Activated CD4-positive, alpha-beta memory T cell treated with anti-CD3 and anti-CD28 coated beads, Interleukin-2, amount 10 ng/mL, durations not matched to agents 7 days and 5 days (primary cell): ENCODE measurements at regions of chr13 and their contacts with region 1.

Region 1: GRCh38 chr13:49278211-49278610 is 30.5 kb downstream of the CDADC1 start:
- DNase-seq: no peak
- H3K4me3 Mint-ChIP-seq: no peak overlapping the region
- H3K27ac Mint-ChIP-seq: no peak overlapping the region
- H3K4me1 Mint-ChIP-seq: no peaks in the 10 kb centered on the region
- H3K27me3 Mint-ChIP-seq: no peaks in the 10 kb centered on the region

Region 2: DNA sequence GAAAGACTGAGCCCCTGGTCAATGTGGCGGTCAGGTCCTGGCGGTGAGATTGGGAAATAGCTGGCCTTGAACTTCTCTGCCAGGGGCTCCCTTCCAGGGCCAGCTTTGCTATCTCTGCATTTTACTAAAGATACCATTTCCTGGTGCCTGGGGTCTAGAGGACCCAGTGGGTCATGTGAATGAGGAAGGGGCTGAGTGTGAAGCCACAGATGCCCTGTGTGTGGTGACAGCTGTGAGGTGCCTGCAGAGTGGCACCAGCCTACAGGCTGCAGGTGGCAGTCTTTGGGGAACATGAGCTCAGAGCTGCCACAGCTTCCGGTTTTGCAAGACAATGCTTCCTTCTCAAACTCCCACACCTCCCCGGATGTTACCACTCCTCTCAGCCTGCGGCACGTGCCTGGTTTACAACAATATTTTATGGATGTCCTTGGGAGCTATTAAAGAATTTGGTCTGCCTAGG is 63.3 kb before region 1 on chr13:
- CTCF ChIA-PET with region 1: interaction called, 13 read pairs
- POLR2A ChIA-PET with region 1: no interaction called
- DNase-seq: peak; percentile 56
- H3K4me3 Mint-ChIP-seq: no peak overlapping the region
- H3K27ac Mint-ChIP-seq: peak overlapping the region; percentile 17
- H3K4me1 Mint-ChIP-seq: peaks cover 21% of the 10 kb centered on the region
- H3K27me3 Mint-ChIP-seq: peaks cover 27% of the 10 kb centered on the region

Region 3: DNA sequence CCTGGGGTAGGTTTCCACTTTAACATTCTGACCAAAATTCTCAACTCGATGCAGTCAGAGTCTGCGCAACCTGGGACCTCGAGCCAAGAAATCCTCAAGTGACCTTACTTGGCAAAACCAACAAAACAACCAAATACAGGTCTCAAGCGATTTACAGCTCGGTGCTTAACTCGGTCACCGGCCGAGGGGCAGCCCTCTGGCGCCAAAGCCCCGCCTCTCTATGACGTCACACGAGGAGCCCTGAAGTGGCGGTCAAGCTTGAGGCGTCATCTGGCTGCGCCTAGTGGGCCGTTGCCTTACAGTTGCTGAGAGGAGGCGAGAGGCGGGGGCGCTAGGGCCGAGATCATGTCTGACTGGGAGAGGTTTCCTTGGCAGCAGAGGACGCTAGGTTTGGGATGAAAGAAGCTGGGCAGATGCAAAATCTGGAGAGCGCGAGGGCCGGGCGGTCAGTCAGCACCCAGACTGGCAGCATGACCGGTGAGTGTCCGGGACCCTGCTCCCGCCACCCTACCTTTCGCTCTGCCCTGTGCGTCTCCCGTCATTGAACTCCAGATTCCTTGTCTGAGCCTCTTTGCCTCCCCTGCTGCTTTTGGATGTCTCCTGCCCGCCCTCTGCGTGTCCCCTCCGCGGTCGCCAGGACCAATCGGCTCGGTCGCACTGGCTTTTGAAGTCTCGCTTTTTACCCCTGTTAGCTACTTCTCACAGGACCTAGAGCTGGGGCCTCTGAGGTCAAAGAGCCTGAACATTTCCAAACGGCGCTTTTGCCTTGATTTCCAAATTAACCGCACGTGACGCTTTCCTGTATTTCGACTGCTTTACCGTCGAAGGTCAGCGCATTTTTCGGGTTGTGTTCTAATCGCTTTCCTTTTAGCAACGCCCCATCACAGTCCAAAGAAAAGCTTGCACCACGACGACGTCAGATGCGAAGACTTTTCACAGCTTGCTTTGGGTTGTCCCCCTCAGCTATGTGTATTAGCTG is 30.3 kb before region 1 on chr13 and contains the start of gene CDADC1:
- CTCF ChIA-PET with region 1: interaction called, 42 read pairs
- POLR2A ChIA-PET with region 1: interaction called, 4 read pairs
- DNase-seq: peak; percentile 95
- H3K4me3 Mint-ChIP-seq: peak within 1 kb of the TSS; percentile 97
- H3K27ac Mint-ChIP-seq: peak within 1 kb of the TSS; percentile 90
- H3K4me1 Mint-ChIP-seq: peaks cover 43% of the 10 kb centered on the region
- H3K27me3 Mint-ChIP-seq: peaks cover 18% of the 10 kb centered on the region
- total RNA-seq, gene CDADC1: 12.8 to 16.7 TPM

Region 4: DNA sequence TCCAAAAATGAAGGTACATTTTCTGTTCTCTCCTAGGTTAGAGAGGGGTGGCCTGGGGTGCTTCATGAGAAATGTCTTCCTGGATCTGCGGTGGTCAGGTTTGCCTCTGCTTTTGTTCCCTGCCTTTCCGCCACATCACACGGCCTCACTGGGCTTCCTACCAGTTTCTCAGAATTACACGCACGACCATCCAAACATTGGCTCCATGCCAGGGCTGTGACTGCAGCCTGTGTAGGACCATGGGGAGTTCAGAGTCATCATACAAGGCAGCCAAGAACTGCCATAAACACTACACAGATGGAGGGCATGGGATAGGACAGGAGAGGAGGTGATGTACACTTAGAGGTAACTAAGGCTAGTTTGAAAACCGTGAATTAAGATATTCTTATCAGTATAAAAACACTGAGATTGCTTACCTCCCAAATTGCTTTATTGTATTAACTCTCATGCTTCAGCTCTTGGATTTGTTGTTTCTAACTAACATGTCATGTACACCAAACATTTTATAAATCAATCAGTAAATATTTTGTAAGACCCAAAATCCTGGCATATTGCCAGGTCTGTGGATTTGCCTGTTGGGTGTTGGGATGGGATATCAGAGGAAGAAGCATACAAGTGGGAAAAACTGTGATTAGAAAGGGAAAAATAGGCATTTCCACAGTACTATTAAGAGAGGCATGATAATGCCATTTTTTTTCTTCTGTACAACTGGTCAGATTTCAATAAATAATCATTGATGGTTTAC is 14.7 kb after region 1 on chr13:
- CTCF ChIA-PET with region 1: interaction called, 11 read pairs
- POLR2A ChIA-PET with region 1: no interaction called
- DNase-seq: peak; percentile 30
- H3K4me3 Mint-ChIP-seq: no peak overlapping the region
- H3K27ac Mint-ChIP-seq: no peak overlapping the region
- H3K4me1 Mint-ChIP-seq: peaks cover 7% of the 10 kb centered on the region
- H3K27me3 Mint-ChIP-seq: no peaks in the 10 kb centered on the region

Region 5: GRCh38 chr13:49367640-49368422 is 89.6 kb after region 1 on chr13:
- CTCF ChIA-PET with region 1: no interaction called
- POLR2A ChIA-PET with region 1: no interaction called
- DNase-seq: no peak
- H3K4me3 Mint-ChIP-seq: no peak overlapping the region
- H3K27ac Mint-ChIP-seq: no peak overlapping the region
- H3K4me1 Mint-ChIP-seq: no peaks in the 10 kb centered on the region
- H3K27me3 Mint-ChIP-seq: no peaks in the 10 kb centered on the region

Region 6: DNA sequence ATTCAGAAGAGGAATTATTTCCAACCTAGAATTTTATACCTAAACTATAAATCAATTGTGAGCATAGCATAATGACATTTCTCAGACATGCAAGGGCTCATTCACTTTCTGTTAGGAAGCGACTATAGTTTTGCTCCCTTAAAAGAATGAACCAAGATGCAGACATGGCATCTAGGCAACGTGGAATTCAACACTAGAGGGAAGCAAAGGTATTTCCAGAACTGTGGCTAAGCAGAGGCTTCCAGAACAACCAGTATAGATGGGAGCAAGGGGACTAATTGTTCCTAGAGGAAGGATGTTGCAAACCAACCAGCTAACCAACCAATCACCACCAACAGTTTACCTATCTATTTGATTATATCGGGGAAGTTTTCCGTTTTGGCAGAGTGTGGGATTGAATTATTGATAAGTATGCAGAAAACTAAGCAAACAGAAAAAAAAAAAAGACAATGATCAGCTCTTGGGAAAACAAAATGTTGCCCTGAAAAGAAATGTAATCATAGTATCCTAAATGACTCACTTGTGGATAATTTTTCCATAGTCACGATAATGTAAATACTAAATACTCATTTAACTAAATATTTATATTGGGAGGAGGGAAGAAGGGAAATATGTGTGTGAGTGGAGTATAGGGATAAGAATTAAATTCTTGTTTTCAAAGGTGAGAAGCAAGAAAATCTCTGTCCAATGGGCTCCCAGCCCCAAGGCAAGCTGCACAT is 371.2 kb after region 1 on chr13:
- CTCF ChIA-PET with region 1: no interaction called
- POLR2A ChIA-PET with region 1: no interaction called
- DNase-seq: no peak
- H3K4me3 Mint-ChIP-seq: no peak overlapping the region
- H3K27ac Mint-ChIP-seq: no peak overlapping the region
- H3K4me1 Mint-ChIP-seq: peaks cover 9% of the 10 kb centered on the region
- H3K27me3 Mint-ChIP-seq: no peaks in the 10 kb centered on the region

Region 7: GRCh38 chr13:49679246-49679645 is 401.0 kb after region 1 on chr13:
- CTCF ChIA-PET with region 1: no interaction called
- POLR2A ChIA-PET with region 1: no interaction called
- DNase-seq: no peak
- H3K4me3 Mint-ChIP-seq: no peak overlapping the region
- H3K27ac Mint-ChIP-seq: no peak overlapping the region
- H3K4me1 Mint-ChIP-seq: peaks cover 18% of the 10 kb centered on the region
- H3K27me3 Mint-ChIP-seq: no peaks in the 10 kb centered on the region